Left lung (tissue), 14 donors: ENCODE measurements at regions of chr4 and their contacts with region 1.

Region 1: DNA sequence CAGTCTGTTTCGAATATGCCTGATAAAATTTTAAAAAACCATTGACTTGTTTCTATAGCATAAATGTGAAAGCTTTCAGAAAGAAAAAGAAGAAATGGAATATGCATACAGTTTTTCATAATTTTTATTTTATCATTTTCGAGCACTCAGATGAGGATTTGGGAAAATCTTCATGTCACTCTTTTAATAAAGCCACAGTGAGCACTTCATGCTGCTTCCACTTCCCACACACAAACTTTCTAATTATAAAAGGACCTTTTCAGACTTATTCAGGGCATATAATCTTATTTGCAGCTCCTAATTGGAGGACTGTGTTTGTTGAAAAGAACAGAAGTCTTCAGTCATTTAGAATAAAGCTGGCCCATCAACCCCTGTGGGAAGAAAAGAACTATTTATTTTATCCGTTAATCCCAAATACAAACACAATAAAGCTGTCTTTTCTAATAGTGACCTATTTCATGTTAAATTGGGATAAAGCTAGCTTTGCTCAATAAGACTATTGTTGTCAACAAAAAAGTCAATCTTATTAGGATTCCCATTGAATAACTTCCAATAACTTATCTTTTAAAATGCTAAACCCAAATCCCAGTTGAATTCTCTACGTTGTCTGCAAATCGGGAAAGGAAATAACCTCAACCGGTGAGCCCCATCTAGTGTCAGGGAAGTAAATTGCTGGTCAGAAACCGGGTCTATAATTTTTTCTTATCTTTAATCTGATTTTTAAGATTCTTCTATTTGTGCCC is 211.5 kb downstream of the PDGFRA start:
- DNase-seq: peak in 1 of 4 donors; percentile 8
- ATAC-seq: peak; percentile 77
- H3K4me3 ChIP-seq: peak overlapping the region; percentile 4 to 12
- H3K27ac ChIP-seq: peak overlapping the region in 1 of 2 donors; percentile 63
- H3K4me1 ChIP-seq: peaks cover 0 to 13% of the 10 kb centered on the region in 2 donors
- H3K27me3 ChIP-seq: no peaks in the 10 kb centered on the region
- CTCF ChIP-seq: peak; percentile 38 to 52

Region 2: GRCh38 chr4:54322818-54323417 is 117.6 kb before region 1 on chr4:
- intact Hi-C with region 1: loop called in 1 of 2 experiments (anchors 5 kb)
- DNase-seq: peak in 3 of 4 donors; percentile 47 to 67 (median 49)
- ATAC-seq: peak; percentile 93
- H3K4me3 ChIP-seq: no peak overlapping the region
- H3K27ac ChIP-seq: no peak overlapping the region
- H3K4me1 ChIP-seq: no peaks in the 10 kb centered on the region
- H3K27me3 ChIP-seq: no peaks in the 10 kb centered on the region
- CTCF ChIP-seq: peak; percentile 61 to 62

Region 3: GRCh38 chr4:54596201-54596600 is 155.6 kb after region 1 on chr4:
- intact Hi-C with region 1: no loop called
- DNase-seq: no peak
- ATAC-seq: no peak
- H3K4me3 ChIP-seq: no peak overlapping the region
- H3K27ac ChIP-seq: no peak overlapping the region
- H3K4me1 ChIP-seq: no peaks in the 10 kb centered on the region
- H3K27me3 ChIP-seq: no peaks in the 10 kb centered on the region
- CTCF ChIP-seq: no peak